Caco-2 (cell line): ENCODE measurements at regions of chr6 and their contacts with region 1.

Region 1: GRCh38 chr6:43910638-43911353 is 140.8 kb downstream of the VEGFA start:
- DNase-seq: peak in 1 of 2 experiments; percentile 75
- H3K4me3 ChIP-seq: no peak overlapping the region
- H3K4me3 Mint-ChIP-seq: peak overlapping the region; percentile 18
- H3K27ac Mint-ChIP-seq: peak overlapping the region; percentile 94
- H3K4me1 ChIP-seq: peaks cover 39% of the 10 kb centered on the region
- H3K4me1 Mint-ChIP-seq: peaks cover 22% of the 10 kb centered on the region
- H3K27me3 ChIP-seq: no peaks in the 10 kb centered on the region
- H3K27me3 Mint-ChIP-seq: no peaks in the 10 kb centered on the region
- CTCF ChIP-seq: no peak

Region 2: DNA sequence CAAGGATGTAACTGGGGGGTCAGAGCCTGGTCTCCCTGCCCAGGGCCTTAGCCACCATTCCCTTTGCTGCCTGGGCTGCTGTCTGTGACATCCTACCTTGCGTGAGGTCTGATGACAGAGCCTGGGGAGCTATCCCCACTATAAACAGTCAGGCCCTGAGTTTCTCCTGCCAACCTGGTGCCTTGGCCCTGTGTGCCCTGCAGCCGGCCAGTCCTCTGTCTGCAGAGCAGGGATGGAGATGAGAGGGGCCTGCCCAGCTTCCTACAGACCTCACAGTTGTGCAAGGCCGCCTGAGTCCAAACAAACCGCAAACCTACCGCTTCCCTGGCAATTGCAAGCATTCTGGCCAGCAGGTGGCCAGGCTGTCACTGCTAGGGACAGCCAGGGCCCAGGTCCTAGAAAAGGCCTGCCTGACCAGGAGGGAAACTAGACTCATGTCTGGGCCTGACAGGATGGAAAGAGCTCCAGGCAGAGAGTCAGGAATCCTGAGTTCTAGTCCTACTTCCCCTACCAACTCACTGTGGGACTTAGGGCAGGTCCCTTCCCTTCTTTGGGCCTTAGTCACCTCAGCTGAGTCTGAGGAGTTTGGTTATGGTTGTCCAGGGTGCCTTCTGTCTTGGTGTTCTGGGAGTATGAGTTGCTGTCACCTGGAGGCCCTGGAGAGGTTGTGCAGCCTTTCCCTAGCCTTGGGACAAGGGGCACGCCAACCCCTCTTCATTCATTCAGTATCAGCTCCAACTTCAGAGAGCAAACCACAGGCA is 54.6 kb before region 1 on chr6:
- CTCF ChIA-PET with region 1: interaction called, 3 read pairs
- POLR2A ChIA-PET with region 1: no interaction called
- intact Hi-C with region 1: loop called (anchors 5 kb)
- DNase-seq: peak; percentile 72 to 77
- H3K4me3 ChIP-seq: no peak overlapping the region
- H3K4me3 Mint-ChIP-seq: no peak overlapping the region
- H3K27ac Mint-ChIP-seq: peak overlapping the region; percentile 54
- H3K4me1 ChIP-seq: peaks cover 24% of the 10 kb centered on the region
- H3K4me1 Mint-ChIP-seq: peaks cover 14% of the 10 kb centered on the region
- H3K27me3 ChIP-seq: no peaks in the 10 kb centered on the region
- H3K27me3 Mint-ChIP-seq: no peaks in the 10 kb centered on the region
- CTCF ChIP-seq: peak; percentile 55 to 76

Region 3: GRCh38 chr6:43951063-43951755 is 40.4 kb after region 1 on chr6:
- CTCF ChIA-PET with region 1: interaction called, 4 read pairs
- POLR2A ChIA-PET with region 1: no interaction called
- intact Hi-C with region 1: loop called (anchors 1 kb)
- DNase-seq: peak; percentile 75 to 82
- H3K4me3 ChIP-seq: no peak overlapping the region
- H3K4me3 Mint-ChIP-seq: no peak overlapping the region
- H3K27ac Mint-ChIP-seq: no peak overlapping the region
- H3K4me1 ChIP-seq: 0 out of 2 replicates have a peak, but pooled peaks cover 3% of the 10 kb centered on the region
- H3K4me1 Mint-ChIP-seq: no peaks in the 10 kb centered on the region
- H3K27me3 ChIP-seq: no peaks in the 10 kb centered on the region
- H3K27me3 Mint-ChIP-seq: no peaks in the 10 kb centered on the region
- CTCF ChIP-seq: peak; percentile 59 to 89